ENCODE measurements at regions of chr2 and their contacts with region 1.

Region 1: DNA sequence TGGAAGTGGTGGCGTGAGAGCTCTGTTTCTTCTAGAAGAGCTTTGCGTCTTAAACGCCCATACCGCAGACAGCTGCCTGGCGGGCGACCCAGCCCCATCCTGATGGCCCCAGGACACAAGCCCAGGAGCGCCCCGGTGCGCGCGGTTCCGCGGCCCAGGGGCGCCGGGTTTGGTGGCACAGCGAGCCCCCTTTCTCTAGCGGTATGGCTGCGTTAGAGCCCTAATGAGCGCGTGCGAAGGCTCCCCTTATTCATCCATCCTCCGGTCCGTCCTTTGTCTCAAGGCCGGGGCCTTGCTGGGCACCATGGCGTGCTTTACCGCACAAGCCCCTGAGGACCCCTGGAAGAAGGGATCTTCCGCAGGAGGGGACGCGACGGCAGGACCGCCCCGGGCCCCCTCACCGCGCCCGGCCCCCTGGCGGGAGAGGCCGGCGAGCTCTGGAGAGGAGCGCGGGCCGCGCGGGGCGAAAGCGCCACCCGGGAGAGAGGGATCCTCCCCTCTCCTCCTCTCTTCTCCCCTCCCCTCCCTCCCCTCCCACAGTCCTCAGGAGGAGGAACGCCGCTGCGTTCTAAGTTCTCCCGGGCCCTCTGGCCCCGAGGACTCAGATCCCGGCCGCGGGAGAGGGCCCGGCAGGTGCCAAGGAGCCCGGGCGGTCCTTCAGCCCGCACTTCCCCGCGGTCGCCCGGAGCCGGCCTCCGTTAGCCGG is 626 bp upstream of the SLC1A4 start:
- DNase-seq: peak; percentile 70 to 82
- ATAC-seq: peak; percentile 60 to 77
- H3K4me3 ChIP-seq: peak overlapping the region; percentile 73 to 99 (median 92)
- H3K27ac ChIP-seq: peak overlapping the region; percentile 89 to 97 (median 96)
- H3K4me1 ChIP-seq: peaks cover 49 to 52% of the 10 kb centered on the region in 2 donors
- H3K27me3 ChIP-seq: no peaks in the 10 kb centered on the region
- CTCF ChIP-seq: peak; percentile 40 to 62 (median 55)
- POLR2A ChIP-seq: peak; percentile 62 to 69

Region 2: DNA sequence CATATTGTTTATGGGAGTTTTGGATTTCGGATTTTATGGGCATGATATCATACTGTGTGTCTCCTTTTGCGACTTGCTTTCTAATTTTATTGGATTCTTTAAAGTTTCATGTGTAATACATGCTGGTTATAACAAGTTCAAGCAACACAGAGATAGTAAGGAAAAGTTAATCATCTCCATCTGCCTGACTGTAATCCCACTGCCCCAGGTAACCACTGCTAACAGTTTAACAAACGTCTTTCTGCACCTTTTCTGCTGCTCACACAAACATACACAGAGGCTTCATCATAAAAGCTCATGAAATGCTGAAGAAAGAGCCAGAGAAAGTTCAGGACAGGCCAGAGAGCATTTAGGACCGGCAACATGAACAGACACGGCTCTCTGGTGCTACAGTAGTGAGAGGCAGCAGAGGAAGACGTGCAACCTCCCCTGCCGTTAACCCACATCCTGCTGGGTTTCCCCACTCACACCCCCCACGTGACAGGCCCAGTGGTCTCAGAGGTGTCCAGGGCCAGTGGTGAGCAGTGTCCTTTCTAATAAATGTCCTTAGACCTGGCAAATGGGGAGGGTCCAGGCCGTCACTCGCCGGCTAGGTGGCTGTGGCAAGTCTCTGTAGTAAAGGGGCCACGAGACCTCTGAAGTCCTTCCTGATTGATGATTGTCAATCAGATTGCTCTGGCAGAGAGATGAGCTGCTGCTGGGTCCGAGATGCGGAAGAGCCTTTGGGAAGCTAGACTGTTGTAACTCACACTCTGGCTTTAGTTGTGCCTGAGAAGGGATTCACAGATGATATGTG is 42.4 kb before region 1 on chr2:
- in situ Hi-C with region 1: no loop called
- intact Hi-C with region 1: loop called (anchors 1 kb)
- DNase-seq: no peak
- ATAC-seq: no peak
- H3K4me3 ChIP-seq: no peak overlapping the region
- H3K27ac ChIP-seq: no peak overlapping the region
- H3K4me1 ChIP-seq: peaks cover 34 to 39% of the 10 kb centered on the region in 2 donors
- H3K27me3 ChIP-seq: no peaks in the 10 kb centered on the region
- CTCF ChIP-seq: no peak
- POLR2A ChIP-seq: no peak

Region 3: DNA sequence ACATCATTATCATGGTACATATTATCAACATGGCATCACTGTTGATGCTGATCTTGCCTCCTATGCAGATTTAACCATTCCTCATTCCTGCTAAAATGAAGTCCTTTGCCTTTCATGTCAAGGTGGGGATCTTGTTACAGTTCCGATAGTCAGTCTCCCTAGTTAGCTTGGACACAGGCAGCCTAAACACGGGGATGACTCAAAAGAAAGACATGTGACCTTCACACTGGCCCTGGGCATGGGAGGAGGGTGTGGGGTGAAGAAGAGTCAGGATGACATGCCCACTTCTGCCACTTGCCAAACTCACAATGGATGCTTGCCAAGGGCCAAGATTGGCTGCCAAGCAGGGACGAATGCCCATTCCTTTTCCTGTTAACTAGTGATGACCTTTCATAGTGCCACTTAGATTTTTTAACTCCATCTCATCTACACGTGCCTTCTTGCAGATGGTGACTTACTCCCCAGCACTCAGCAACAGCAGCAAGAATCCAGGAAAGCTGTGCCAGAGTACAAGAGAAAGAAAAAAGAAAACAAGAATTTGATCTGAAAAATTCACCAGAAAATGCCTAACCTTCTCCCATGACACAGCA is 13.2 kb before region 1 on chr2:
- in situ Hi-C with region 1: no loop called
- intact Hi-C with region 1: loop called (anchors 1 kb)
- DNase-seq: peak; percentile 79 to 92
- ATAC-seq: peak; percentile 92
- H3K4me3 ChIP-seq: no peak overlapping the region
- H3K27ac ChIP-seq: peak overlapping the region; percentile 81 to 85 (median 84)
- H3K4me1 ChIP-seq: peaks cover 48 to 58% of the 10 kb centered on the region in 2 donors
- H3K27me3 ChIP-seq: no peaks in the 10 kb centered on the region
- CTCF ChIP-seq: no peak
- POLR2A ChIP-seq: no peak

Region 4: GRCh38 chr2:65040400-65041261 is 52.1 kb after region 1 on chr2:
- in situ Hi-C with region 1: loop called in 1 of 4 experiments (anchors 10 kb)
- intact Hi-C with region 1: loop called (anchors 5 kb)
- DNase-seq: peak; percentile 78 to 86
- ATAC-seq: peak; percentile 97
- H3K4me3 ChIP-seq: peak overlapping the region in 1 of 4 donors; percentile 37
- H3K27ac ChIP-seq: no peak overlapping the region
- H3K4me1 ChIP-seq: peaks cover 0 to 5% of the 10 kb centered on the region in 2 donors
- H3K27me3 ChIP-seq: no peaks in the 10 kb centered on the region
- CTCF ChIP-seq: peak; percentile 94 to 98 (median 95)
- POLR2A ChIP-seq: no peak

Region 5: DNA sequence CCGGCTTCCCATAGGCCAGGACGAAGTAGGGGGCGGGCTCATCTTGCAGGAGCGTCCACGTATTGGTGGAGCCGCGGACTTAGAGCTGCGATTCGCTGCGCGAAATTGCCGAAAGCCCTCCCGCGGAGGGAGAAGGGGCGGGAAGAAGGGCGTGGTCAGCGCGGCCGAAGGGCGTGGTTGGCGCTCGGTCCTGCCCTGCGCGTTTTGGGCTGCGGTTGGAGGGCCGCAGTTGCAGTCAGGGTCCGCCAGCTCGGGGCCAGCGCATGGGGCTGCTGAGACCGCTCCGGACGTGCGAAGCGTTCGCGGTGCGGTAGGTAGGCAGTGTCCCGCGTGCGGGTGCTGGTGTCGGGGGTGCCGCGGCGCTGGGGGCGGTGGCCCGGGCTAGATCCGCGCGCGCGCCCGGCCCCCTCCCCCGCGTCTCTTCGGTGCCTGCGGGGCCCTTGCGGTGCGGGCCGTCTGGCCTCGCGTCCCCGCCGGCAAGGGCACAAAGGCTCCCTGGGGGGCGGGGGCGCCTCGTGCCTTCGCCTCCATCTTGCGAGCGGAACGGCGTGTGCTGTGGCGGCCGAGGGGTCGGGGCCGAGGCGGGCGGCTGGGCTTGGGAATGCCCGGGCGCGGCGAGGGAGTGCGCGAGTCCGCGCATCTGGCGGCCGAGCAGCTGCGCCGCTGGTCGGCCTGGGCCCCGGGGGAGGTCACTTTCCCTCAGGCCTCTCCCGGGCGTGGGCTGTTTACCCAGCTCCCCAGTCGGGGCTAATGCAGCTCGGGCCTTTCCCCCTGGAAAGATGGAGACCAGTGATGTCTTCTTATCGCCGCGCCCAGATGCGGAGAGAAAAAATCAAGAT is 67.9 kb after region 1 on chr2 and contains the start of gene CEP68:
- in situ Hi-C with region 1: no loop called
- intact Hi-C with region 1: loop called (anchors 5 kb)
- DNase-seq: peak; percentile 98
- ATAC-seq: peak; percentile 93
- H3K4me3 ChIP-seq: peak within 1 kb of the TSS; percentile 70 to 90 (median 86)
- H3K27ac ChIP-seq: peak within 1 kb of the TSS; percentile 90 to 96 (median 92)
- H3K4me1 ChIP-seq: peaks cover 48 to 50% of the 10 kb centered on the region in 2 donors
- H3K27me3 ChIP-seq: no peaks in the 10 kb centered on the region
- CTCF ChIP-seq: peak in 3 of 5 experiments; percentile 9 to 26 (median 19)
- POLR2A ChIP-seq: peak; percentile 96 to 99
- total RNA-seq, gene CEP68: 21.4 to 48.0 (median 35.2) TPM

Measured in gastrocnemius medialis (tissue), 4 donors.